Activated CD4-positive, alpha-beta memory T cell treated with anti-CD3 and anti-CD28 coated beads for 36 hours (primary cell): ENCODE measurements at regions of chr6 and their contacts with region 1.

Region 1: DNA sequence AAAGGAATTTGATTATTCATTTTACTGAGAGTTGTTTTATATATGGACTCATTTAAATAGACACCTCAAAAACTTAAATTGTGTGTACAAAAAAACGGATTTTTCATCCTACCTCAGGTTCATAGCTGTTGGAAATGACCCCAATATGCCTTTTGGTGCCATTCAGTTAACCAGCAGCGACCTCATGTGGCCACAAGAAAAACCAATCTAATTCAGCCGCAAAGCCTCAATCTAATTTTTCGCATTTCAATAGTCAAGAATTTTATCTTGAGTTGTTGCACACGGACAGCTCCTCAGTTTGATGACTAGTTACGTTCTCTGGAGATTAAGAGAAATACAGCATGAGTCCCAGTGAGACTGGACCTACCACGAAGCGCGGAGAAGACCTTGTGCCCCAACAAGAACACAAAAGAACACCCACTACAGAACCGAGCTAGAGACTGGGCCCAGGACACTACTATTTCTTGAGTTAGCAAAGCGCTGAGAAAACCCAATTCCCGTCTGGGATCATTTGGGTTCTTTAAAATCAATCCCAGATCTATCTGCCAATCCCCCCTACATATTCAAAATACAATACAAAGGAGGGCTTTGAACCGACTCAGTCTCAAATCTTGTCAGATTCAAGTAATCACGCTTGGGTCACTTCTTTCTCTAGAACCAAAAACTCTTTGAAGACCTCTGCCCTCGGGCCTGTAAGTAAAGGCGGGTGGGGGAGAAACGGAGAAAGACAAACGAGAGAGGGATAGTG is 1.1 kb downstream of the TCP11 start:
- DNase-seq: peak; percentile 62
- H3K4me3 Mint-ChIP-seq: no peak overlapping the region
- H3K27ac Mint-ChIP-seq: no peak overlapping the region
- H3K4me1 Mint-ChIP-seq: peaks cover 15% of the 10 kb centered on the region
- H3K27me3 Mint-ChIP-seq: peaks cover 17% of the 10 kb centered on the region

Region 2: DNA sequence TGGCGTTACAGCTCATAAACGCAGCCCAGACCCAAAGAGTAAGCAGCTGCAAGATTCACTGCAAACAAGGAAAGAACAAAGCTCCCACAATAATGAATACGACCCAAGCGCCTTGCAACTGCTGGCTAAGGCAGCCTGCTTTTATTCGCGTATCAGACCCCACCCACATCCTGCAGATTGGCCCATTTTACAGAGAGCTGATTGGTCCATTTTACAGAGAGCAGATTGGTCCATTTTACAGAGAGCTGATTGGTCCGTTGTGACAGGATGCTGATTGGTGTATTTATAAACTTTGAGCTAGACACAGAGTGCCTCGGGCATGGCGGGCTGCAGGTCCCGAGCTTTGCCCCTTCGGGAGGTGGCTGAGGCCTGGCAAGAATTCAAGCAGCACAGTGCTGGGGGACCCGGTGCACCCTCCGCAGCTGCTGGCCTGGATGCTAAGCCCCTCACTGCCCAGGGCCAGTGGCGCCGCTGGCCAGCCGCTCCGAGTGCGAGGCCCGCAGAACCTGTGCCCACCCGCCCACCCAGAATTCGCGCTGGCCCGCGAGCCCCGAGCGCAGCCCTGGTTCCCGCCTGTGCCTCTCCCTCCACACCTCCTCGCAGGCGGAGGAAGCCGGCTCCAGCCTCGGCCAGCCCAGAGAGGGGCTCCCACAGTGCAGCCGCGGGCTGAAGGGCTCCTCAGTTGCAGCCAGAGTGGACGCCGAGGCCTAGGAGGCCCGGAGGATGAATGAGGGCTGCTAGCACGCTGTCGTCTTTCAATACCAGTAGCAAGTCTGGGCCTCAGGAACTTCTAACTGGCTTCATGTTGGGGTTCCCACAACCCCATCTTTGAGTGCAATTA is 703.1 kb before region 1 on chr6:
- CTCF ChIA-PET with region 1: no interaction called
- POLR2A ChIA-PET with region 1: no interaction called
- intact Hi-C with region 1: no loop called
- DNase-seq: no peak
- H3K4me3 Mint-ChIP-seq: no peak overlapping the region
- H3K27ac Mint-ChIP-seq: no peak overlapping the region
- H3K4me1 Mint-ChIP-seq: no peaks in the 10 kb centered on the region
- H3K27me3 Mint-ChIP-seq: no peaks in the 10 kb centered on the region

Region 3: DNA sequence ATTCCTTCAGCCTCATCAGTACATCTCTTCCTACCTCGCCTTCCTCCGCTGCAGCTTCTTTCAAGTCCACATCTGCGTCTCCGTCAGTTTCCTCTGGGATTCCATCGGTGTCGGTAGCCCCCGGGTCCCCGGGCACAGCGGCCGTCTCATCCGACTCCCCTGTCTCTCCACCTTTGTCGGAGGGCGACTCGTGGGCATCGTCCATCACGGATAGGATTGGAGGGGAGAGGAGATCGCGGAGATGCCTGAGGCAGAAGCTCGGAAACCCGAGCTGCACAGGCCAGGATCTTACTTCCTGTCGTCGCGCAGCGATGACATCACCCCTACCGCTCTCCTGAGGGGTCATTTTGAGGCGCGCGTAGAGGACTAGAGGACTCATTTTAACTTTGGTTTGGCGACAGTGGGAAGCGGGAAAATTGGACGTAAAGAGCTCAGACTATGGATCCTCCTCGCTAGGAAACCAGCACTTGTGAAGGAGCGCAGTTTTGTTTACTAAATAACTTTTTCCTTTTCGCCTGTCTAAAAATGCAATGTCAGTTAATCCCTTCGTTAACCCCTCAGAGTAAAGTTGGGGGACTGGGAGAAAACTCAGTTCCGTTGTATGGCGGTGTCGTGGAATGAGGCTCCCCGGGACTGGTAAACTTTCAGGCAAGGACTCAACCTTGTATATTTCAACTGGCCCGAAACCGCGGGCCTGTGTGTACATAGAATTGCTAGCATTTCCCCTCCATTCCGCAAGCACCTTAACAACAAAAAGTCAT is 252.1 kb before region 1 on chr6 and contains the start of gene TAF11:
- CTCF ChIA-PET with region 1: interaction called, 11 read pairs
- POLR2A ChIA-PET with region 1: no interaction called
- intact Hi-C with region 1: no loop called
- DNase-seq: peak; percentile 95
- H3K4me3 Mint-ChIP-seq: peak within 1 kb of the TSS; percentile 100
- H3K27ac Mint-ChIP-seq: peak within 1 kb of the TSS; percentile 98
- H3K4me1 Mint-ChIP-seq: peaks cover 43% of the 10 kb centered on the region
- H3K27me3 Mint-ChIP-seq: no peaks in the 10 kb centered on the region
- total RNA-seq, gene TAF11: 27.2 to 29.0 TPM

Region 4: DNA sequence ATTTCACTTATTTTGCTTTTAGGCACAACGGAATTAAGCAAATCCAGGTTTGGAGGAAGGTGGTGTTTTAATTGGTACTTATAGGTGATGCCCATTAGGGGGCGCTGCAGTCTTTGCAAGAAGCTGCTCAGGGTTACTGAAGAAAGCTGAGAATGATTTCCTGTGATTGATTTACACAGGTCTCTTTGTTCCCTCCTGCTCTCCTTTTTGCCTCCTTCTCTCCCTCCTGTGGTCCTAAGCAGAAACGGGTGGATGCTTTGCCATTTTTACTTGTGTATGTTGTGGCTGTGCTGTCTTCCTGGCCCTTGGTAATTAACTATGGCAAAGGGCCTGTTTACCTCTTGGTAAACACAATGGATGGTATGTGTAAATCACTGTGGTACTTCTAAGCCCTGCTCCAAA is 153.2 kb before region 1 on chr6:
- CTCF ChIA-PET with region 1: interaction called, 86 read pairs
- POLR2A ChIA-PET with region 1: no interaction called
- intact Hi-C with region 1: loop called (anchors 1 kb)
- DNase-seq: peak; percentile 68
- H3K4me3 Mint-ChIP-seq: no peak overlapping the region
- H3K27ac Mint-ChIP-seq: no peak overlapping the region
- H3K4me1 Mint-ChIP-seq: no peaks in the 10 kb centered on the region
- H3K27me3 Mint-ChIP-seq: no peaks in the 10 kb centered on the region

Region 5: DNA sequence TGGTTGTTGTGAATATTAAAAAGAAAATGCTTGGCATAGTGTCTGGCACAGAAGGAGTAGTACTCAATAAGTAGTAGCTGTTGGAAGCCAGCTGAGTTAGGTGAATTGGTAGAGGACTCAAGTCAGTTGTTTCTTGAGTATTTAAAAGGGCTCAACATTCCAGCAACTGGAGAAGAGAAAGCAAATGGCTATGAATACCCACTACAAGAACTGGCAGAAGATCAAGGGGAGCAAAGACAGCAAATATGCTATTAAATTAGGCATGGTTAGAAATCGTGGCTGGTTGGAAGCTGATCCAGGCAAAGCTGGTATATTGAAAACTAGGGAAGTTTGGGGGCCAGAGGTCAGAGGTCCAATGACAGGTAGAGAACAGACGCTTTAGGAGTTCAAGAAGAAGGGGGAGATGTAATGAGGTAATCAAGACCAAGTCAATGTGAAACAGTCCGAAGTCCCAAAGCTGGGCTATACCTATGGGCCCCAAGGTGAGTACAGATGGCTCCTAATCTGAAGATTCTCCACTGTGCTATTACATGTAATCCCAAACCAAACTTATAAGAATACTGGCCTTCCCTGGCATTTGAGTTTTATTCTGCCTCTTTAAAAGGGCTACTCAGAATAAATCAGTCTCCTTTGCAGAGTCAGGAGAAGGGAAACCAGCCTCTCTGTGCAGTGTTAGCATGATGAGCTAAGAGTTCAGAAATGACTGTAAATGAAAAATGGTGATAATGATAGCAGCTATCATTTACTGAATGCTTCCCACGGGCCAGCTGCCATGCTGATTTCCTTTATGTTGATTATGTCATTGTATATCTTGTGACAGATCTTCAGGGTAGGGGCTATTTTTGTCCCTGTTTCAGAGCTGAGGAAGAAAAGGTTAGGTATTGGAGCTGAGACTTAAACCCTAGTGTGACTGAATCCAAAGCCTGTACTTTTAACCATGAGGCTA is 128.7 kb before region 1 on chr6:
- CTCF ChIA-PET with region 1: interaction called, 13 read pairs
- POLR2A ChIA-PET with region 1: no interaction called
- intact Hi-C with region 1: no loop called
- DNase-seq: peak; percentile 40
- H3K4me3 Mint-ChIP-seq: no peak overlapping the region
- H3K27ac Mint-ChIP-seq: no peak overlapping the region
- H3K4me1 Mint-ChIP-seq: peaks cover 10% of the 10 kb centered on the region
- H3K27me3 Mint-ChIP-seq: no peaks in the 10 kb centered on the region

Region 6: GRCh38 chr6:35128496-35128895 is 11.6 kb before region 1 on chr6:
- CTCF ChIA-PET with region 1: interaction called, 18 read pairs
- POLR2A ChIA-PET with region 1: no interaction called
- intact Hi-C with region 1: no loop called
- DNase-seq: no peak
- H3K4me3 Mint-ChIP-seq: no peak overlapping the region
- H3K27ac Mint-ChIP-seq: no peak overlapping the region
- H3K4me1 Mint-ChIP-seq: no peaks in the 10 kb centered on the region
- H3K27me3 Mint-ChIP-seq: peaks cover 7% of the 10 kb centered on the region